Dendritic cell treated with granulocyte-macrophage colony-stimulating factor and Interleukin-4, amounts not matched to agents 40 ng/mL and 50 ng/mL, for 4 days (primary cell): ENCODE measurements at regions of chr10 and their contacts with region 1.

Region 1: DNA sequence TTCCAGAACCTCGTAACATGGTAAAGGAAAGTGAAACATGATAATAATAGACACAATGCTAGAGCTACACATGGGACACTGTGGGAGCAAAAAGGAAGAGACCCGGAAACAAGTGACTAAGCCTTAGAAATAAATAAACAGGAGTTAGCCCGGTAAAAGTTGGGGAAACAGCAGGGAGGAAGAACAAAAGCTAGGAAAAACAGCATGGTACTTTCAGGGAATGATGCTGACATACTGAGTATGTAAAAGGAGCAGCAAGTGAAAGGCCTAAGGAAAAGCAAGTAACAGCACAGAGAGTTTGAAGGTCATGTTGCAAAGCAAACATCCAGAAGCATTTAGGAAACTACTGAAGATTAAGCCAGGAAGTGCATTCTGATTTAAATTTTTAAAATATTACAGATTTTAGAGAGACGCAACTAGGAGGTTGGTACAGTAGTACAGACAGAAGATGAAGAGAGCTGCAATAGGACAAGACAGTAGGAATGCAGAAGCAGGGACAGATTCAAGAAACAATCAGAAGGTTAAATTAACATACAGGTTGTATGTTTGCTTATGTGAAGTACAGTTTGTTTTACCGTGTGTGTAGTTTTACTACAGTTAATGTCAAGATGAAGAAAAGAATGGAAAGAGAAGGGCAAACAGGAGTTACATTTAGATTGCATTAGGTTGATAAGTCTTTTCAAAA is 63.7 kb downstream of the ARHGAP12 start:
- H3K4me3 Mint-ChIP-seq: no peak overlapping the region
- H3K27ac Mint-ChIP-seq: no peak overlapping the region
- H3K4me1 Mint-ChIP-seq: peaks cover 20% of the 10 kb centered on the region
- H3K27me3 Mint-ChIP-seq: no peaks in the 10 kb centered on the region

Region 2: DNA sequence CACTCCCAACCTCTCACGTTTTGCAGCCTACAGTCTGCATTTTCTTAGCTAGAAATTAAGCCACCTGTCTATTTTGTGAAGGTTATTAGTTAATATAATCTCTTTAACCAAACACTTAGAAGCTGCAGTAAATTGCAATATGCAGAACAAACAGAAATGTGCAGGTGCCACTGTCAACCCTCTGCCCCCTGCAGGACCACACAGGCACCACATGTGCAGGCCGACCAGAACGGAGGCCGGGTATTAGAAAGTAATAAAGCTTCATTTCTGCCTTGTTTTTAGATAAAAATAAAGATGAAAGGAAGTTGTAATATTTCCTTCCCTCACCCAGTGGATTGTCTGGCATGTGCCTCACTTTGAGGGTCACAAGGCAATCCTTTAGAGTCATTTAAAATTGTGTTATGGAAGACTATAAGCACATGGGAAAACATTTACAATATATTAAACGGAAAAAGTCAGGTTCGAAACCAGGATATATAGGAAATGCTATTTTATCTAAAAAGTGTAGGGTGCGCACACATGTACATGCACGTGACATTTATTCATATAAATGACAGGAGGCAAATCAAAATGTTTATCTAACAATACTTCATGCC is 94.6 kb before region 1 on chr10:
- intact Hi-C with region 1: no loop called
- H3K4me3 Mint-ChIP-seq: no peak overlapping the region
- H3K27ac Mint-ChIP-seq: no peak overlapping the region
- H3K4me1 Mint-ChIP-seq: no peaks in the 10 kb centered on the region
- H3K27me3 Mint-ChIP-seq: no peaks in the 10 kb centered on the region

Region 3: DNA sequence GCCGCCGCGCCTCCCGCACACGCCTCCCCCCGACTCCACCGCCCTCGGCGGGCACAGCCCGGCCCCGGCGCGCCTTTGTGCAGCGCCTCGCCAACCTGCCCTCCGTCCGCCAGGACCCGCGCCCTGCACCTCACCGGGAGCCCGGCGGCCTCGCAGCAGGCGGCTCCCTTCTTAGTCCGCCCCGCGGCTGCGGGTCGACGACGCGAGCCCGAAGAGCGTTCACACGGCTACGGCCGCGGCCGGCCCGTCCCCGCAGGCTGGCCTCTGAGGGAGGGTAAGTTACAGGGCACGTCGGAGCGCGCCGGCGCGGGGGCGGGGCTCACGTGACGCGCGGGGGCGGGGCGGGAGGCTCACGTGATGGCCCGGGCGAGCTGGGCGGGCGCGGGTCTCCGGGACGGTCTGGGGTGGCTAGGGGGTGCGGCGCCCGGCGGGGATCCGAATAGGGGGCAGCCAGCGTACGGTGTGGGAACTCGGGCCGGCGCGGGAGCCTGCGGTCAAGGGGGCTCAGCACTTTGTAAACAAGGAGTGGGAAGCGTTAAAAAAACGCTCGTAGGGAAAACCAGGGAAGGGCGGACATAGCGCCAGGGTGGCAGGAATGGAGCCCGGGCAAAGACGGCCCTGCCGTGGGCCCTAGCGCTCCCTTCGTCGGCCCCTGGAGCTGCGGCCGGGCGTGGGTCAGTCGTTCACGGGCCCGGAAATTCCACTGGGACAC is 63.7 kb after region 1 on chr10 and contains the start of gene ARHGAP12:
- intact Hi-C with region 1: loop called (anchors 5 kb)
- H3K4me3 Mint-ChIP-seq: peak within 1 kb of the TSS; percentile 98
- H3K27ac Mint-ChIP-seq: peak within 1 kb of the TSS; percentile 96
- H3K4me1 Mint-ChIP-seq: peaks cover 28% of the 10 kb centered on the region
- H3K27me3 Mint-ChIP-seq: no peaks in the 10 kb centered on the region

Region 4: GRCh38 chr10:32005050-32005449 is 140.1 kb after region 1 on chr10:
- intact Hi-C with region 1: loop called (anchors 5 kb)
- H3K4me3 Mint-ChIP-seq: no peak overlapping the region
- H3K27ac Mint-ChIP-seq: no peak overlapping the region
- H3K4me1 Mint-ChIP-seq: peaks cover 8% of the 10 kb centered on the region
- H3K27me3 Mint-ChIP-seq: no peaks in the 10 kb centered on the region

Region 5: DNA sequence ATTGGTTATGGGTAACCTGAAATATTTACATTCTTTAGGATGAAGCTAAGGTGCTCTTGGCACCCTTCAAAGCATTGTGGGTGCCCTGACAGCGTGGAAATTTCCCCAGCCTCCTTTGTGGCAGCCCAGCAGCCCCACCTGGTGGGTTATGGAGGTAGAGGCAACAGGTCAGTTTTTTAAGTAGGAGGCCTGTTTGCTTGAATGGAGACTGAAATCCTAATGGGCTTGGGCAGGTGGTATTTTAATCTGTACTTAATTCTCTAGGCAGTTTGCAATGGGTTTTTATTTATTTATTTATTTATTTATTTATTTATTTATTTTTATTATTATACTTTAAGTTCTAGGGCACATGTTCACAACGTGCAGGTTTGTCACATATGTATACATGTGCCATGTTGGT is 342.6 kb after region 1 on chr10:
- intact Hi-C with region 1: loop called (anchors 10 kb)
- H3K4me3 Mint-ChIP-seq: no peak overlapping the region
- H3K27ac Mint-ChIP-seq: no peak overlapping the region
- H3K4me1 Mint-ChIP-seq: peaks cover 12% of the 10 kb centered on the region
- H3K27me3 Mint-ChIP-seq: peaks cover 3% of the 10 kb centered on the region